Activated CD8-positive, alpha-beta T cell treated with anti-CD3 and anti-CD28 coated beads for 36 hours (primary cell): ENCODE measurements at regions of chr3 and their contacts with region 1.

Region 1: GRCh38 chr3:10772271-10773161 is 43.5 kb upstream of the SLC6A11 start:
- DNase-seq: peak; percentile 35
- ATAC-seq: no peak
- H3K4me3 Mint-ChIP-seq: no peak overlapping the region
- H3K27ac Mint-ChIP-seq: no peak overlapping the region
- H3K4me1 Mint-ChIP-seq: no peaks in the 10 kb centered on the region
- H3K27me3 Mint-ChIP-seq: peaks cover 8% of the 10 kb centered on the region
- CTCF ChIP-seq: peak; percentile 22

Region 2: GRCh38 chr3:10551821-10552630 is 220.5 kb before region 1 on chr3:
- CTCF ChIA-PET with region 1: no interaction called
- POLR2A ChIA-PET with region 1: no interaction called
- intact Hi-C with region 1: no loop called
- DNase-seq: peak; percentile 94
- ATAC-seq: peak; percentile 74
- H3K4me3 Mint-ChIP-seq: peak overlapping the region; percentile 51
- H3K27ac Mint-ChIP-seq: peak overlapping the region; percentile 84
- H3K4me1 Mint-ChIP-seq: peaks cover 34% of the 10 kb centered on the region
- H3K27me3 Mint-ChIP-seq: peaks cover 6% of the 10 kb centered on the region
- CTCF ChIP-seq: no peak

Region 3: DNA sequence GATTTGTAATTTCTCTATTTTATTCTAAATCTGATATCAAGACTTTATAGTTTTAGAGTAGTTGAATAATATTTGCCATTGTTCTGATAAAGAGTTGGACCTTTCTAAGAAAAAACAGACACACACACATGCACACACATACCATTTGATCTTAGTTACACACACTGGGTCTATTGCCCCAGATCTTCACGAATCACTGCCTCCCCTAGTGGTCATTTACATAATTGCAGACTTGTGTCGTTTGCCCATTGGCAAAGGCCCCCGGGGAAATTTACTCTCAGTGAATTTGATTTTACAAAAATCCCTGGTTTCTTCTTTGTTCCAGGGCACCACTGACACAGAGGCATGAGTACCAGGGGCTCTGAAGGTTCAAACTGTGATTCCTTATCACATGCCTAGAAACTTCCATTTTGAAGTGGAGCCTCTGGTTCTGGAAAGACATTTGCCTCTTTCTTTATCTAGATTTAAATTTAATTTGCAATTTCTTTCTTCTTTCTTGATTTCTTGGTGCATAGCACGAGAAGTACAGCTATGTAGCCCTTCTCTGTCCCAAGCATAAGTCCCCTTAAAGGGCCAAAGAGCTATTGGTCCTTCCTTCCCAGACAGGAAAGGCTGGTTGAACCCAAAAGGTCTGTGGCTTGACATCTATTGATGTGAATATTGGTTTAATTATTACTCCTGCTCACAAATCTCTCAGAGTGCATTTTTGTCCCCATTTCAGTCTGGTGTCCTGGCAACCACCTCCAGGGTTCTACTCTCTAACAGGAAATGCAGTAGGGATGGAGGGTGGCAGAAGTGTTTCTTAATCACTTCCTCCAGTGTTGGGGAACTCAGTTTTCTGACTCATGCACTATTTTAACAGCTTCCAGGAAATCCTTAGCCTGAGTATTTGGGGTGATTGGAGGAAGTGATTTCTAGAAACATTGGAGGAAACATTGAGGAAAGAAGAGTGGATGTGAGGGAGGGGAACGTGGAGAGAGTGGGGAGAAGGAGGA is 11.1 kb after region 1 on chr3:
- CTCF ChIA-PET with region 1: interaction called, 10 read pairs
- POLR2A ChIA-PET with region 1: no interaction called
- intact Hi-C with region 1: no loop called
- DNase-seq: peak; percentile 53
- ATAC-seq: peak; percentile 42
- H3K4me3 Mint-ChIP-seq: no peak overlapping the region
- H3K27ac Mint-ChIP-seq: no peak overlapping the region
- H3K4me1 Mint-ChIP-seq: peaks cover 6% of the 10 kb centered on the region
- H3K27me3 Mint-ChIP-seq: peaks cover 28% of the 10 kb centered on the region
- CTCF ChIP-seq: peak; percentile 95